Transverse colon (tissue), 4 donors: ENCODE measurements at regions of chr21 and their contacts with region 1.

Region 1: DNA sequence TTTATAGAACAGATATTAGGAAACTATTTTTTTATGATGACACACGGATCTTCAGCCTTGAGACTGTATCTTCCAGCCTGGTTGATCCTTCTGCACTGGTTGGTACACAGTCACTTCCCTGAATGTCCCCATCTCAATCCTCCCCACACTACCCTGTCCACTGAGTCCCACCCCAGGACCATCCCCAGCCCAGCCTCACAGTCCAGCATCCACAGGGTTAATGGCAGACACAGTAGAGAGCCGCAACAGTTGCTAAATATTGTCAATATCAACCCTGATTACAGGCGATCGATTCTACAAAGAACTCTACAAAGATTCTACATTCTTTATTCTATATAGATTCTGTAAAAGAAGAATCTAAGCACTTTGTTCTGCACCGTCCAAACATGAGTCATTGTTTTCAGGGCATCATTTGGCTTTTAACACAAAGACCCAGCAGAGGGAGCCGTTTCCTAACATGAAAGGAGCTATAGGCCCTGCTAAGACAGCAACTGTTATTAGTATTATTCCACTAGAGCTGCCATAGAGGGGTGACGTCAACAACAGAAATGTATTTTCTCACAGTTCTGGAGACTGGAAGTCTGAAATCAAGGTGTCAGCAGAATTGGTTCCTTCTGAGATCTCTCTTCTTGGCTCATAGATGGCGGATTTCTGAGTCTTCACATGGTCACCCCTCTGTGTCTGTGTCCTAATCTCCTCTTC is 30.1 kb upstream of the IFNAR2 start:
- DNase-seq: peak; percentile 86
- H3K4me3 ChIP-seq: no peak overlapping the region
- H3K27ac ChIP-seq: peak overlapping the region; percentile 19 to 52 (median 36)
- H3K4me1 ChIP-seq: peaks cover 0 to 26% (median 14%) of the 10 kb centered on the region in 4 donors
- H3K27me3 ChIP-seq: no peaks in the 10 kb centered on the region
- CTCF ChIP-seq: peak; percentile 69 to 86 (median 79)
- EP300 ChIP-seq: no peak
- POLR2A ChIP-seq: no peak

Region 2: GRCh38 chr21:32834916-32835235 is 364.8 kb before region 1 on chr21:
- in situ Hi-C with region 1: loop called in 2 of 4 experiments (anchors 10 kb)
- intact Hi-C with region 1: no loop called
- DNase-seq: no peak
- H3K4me3 ChIP-seq: no peak overlapping the region
- H3K27ac ChIP-seq: no peak overlapping the region
- H3K4me1 ChIP-seq: peaks cover 0 to 4% (median 0%) of the 10 kb centered on the region in 4 donors
- H3K27me3 ChIP-seq: peaks cover 9% of the 10 kb centered on the region
- CTCF ChIP-seq: no peak
- EP300 ChIP-seq: no peak
- POLR2A ChIP-seq: no peak

Region 3: DNA sequence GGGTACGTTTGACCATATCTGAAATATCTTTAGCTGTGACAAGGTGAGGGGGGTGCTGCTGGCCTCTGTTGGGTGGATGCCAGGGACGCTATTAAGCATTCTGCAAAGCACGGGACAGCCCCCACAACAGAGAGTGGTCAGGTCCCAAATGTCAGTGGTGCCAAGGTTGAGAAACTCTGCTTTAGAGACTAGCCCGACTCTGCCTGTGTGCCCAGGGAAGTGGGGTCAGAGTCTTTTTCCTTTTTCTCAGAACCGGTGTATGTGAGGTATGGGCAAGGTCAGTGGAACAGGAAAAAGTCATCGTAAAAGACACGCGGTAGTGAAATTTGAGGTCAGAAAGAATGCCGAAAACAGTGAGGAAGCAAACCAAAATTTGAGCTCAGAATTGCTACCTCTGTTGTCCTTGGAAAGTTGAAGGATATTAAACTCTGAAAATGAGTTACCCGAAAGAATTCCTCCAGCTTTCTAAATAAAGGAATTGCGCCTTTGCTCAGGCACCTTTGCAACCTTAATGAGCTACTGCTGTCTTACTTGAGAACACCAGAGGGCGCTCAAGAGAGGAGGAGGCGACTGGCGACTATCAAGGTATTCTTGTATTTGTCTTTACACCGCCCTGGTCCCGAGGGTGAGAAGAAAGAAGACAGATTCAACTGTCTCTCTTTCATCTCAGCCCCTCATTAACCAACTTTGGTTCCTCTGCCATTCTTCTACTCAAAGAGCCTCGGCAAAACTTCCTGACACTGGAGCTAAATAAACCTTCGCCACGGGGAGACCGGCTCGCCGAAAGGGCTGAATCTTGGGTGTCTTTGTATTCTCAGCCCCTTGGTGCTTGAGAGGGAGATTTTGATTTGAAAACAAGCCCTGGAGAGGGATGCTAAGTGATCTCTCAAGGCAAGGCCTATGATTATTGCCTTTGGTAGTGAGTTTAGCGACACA is 259.3 kb before region 1 on chr21:
- in situ Hi-C with region 1: loop called in 2 of 4 experiments (anchors 10 kb)
- intact Hi-C with region 1: loop called (anchors 10 kb)
- DNase-seq: peak; percentile 41
- H3K4me3 ChIP-seq: no peak overlapping the region
- H3K27ac ChIP-seq: no peak overlapping the region
- H3K4me1 ChIP-seq: no peaks in the 10 kb centered on the region
- H3K27me3 ChIP-seq: peaks cover 18% of the 10 kb centered on the region
- CTCF ChIP-seq: peak; percentile 50 to 79 (median 72)
- EP300 ChIP-seq: no peak
- POLR2A ChIP-seq: no peak

Region 4: GRCh38 chr21:33360881-33361602 is 161.4 kb after region 1 on chr21:
- in situ Hi-C with region 1: loop called in 2 of 4 experiments (anchors 5 to 10 kb)
- intact Hi-C with region 1: loop called (anchors 10 kb)
- DNase-seq: peak; percentile 89
- H3K4me3 ChIP-seq: peak overlapping the region in 2 of 4 donors; percentile 0 to 34
- H3K27ac ChIP-seq: peak overlapping the region; percentile 68 to 84 (median 71)
- H3K4me1 ChIP-seq: peaks cover 0 to 38% (median 18%) of the 10 kb centered on the region in 4 donors
- H3K27me3 ChIP-seq: no peaks in the 10 kb centered on the region
- CTCF ChIP-seq: peak; percentile 76 to 96 (median 86)
- EP300 ChIP-seq: no peak
- POLR2A ChIP-seq: peak; percentile 12

Region 5: DNA sequence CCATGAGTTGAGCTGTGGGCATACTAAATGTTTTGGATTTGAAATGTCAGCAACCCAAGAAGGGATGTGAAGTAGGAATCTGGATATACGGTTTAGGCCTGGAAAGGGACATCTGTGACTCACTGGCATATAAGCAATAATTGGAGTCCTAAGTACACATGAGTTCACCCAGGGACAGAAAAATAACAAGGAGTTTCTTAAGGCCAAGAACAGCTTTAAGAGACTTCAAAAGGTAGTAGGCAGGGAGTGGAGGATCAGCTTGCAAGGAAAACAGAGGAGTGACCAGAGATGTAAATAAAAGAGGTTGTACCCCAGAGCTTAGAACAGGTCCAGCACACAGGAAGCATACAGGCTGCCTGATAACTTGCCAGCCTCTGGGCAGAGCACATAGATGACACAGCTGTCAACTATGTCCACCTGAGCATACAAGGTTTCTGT is 252.0 kb after region 1 on chr21:
- in situ Hi-C with region 1: loop called in 2 of 4 experiments (anchors 5 to 10 kb)
- intact Hi-C with region 1: loop called (anchors 10 kb)
- DNase-seq: no peak
- H3K4me3 ChIP-seq: no peak overlapping the region
- H3K27ac ChIP-seq: peak overlapping the region in 1 of 4 donors; percentile 23
- H3K4me1 ChIP-seq: peaks cover 0 to 12% (median 3%) of the 10 kb centered on the region in 4 donors
- H3K27me3 ChIP-seq: no peaks in the 10 kb centered on the region
- CTCF ChIP-seq: no peak
- EP300 ChIP-seq: no peak
- POLR2A ChIP-seq: no peak